CD14-positive monocyte (primary cell): ENCODE measurements at regions of chr7 and their contacts with region 1.

Region 1: DNA sequence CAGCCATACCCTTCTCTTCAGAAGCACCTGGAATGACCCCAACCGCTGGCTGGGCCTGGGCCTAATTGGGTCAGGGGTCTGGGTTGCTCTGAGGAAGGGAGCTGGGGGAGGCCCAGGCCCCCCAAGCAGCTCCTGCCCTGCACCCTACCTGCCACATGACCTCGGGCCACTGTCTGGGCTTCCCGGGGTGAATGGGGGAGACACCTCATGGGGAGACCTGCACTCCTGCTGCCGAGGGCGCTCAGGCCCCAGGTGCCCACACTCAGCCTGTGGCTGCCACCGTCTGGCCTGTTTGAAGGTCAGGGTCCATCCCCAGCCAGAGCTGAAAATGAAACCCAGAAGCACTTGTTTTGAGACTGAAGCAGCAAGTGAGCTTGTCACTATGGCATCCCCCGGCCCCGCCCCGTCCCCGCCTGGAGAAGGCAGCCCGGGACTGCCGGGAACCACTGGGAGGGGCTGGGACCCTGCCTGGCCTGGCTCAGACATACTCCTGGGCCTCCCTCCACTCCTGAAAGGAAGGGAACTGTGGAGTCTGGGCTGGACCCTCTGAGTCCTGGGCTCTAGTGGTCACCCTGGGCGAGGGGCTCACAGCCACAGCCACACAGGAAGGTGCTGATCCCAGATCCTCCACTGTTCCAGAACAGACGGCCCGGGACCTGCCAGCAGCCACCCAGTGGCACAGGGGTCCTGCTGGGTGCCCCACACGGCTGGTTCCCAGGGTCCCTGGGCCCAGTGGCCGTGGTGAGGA is 7.4 kb upstream of the MICALL2 start:
- DNase-seq: no peak
- H3K4me3 ChIP-seq: no peak overlapping the region
- H3K4me3 Mint-ChIP-seq: no peak overlapping the region
- H3K27ac ChIP-seq: no peak overlapping the region
- H3K27ac Mint-ChIP-seq: no peak overlapping the region
- H3K4me1 ChIP-seq: peaks cover 1 to 9% of the 10 kb centered on the region in 2 donors
- H3K4me1 Mint-ChIP-seq: peaks cover 13% of the 10 kb centered on the region
- H3K27me3 ChIP-seq: no peaks in the 10 kb centered on the region
- H3K27me3 Mint-ChIP-seq: peaks cover 0 to 2% (median 0%) of the 10 kb centered on the region in 3 donors
- CTCF ChIP-seq: no peak

Region 2: GRCh38 chr7:1418505-1419309 is 48.0 kb before region 1 on chr7:
- intact Hi-C with region 1: loop called in 1 of 2 experiments (anchors 5 kb)
- DNase-seq: peak in 2 of 3 donors; percentile 6 to 65
- H3K4me3 ChIP-seq: no peak overlapping the region
- H3K4me3 Mint-ChIP-seq: no peak overlapping the region
- H3K27ac ChIP-seq: no peak overlapping the region
- H3K27ac Mint-ChIP-seq: peak overlapping the region in 1 of 7 donors; percentile 66
- H3K4me1 ChIP-seq: peaks cover 0 to 3% of the 10 kb centered on the region in 2 donors
- H3K4me1 Mint-ChIP-seq: peaks cover 10% of the 10 kb centered on the region
- H3K27me3 ChIP-seq: peaks cover 0 to 7% of the 10 kb centered on the region in 2 donors
- H3K27me3 Mint-ChIP-seq: peaks cover 20 to 28% (median 21%) of the 10 kb centered on the region in 3 donors
- CTCF ChIP-seq: no peak

Region 3: DNA sequence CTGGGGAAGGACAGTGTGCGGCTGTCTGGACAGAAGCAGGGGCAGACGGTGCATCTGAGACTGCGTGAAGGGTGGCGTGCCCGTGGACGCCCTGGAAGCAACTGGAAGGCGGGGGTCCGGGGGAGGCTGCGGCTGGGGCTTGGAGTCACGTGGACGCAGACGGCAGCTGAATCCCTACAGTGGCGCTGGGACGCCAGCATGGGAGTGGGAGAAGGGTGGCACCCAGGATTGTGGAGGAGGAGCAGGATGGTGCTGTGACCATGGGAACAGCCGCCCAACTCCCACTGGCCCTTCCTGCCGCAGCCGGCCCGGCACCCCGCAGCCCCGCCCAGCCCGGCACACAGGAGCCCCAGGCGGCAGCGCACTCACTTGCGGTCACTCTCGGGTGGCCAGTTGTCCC is 27.7 kb after region 1 on chr7:
- intact Hi-C with region 1: no loop called
- DNase-seq: no peak
- H3K4me3 ChIP-seq: no peak overlapping the region
- H3K4me3 Mint-ChIP-seq: no peak overlapping the region
- H3K27ac ChIP-seq: no peak overlapping the region
- H3K27ac Mint-ChIP-seq: no peak overlapping the region
- H3K4me1 ChIP-seq: no peaks in the 10 kb centered on the region
- H3K4me1 Mint-ChIP-seq: no peaks in the 10 kb centered on the region
- H3K27me3 ChIP-seq: no peaks in the 10 kb centered on the region
- H3K27me3 Mint-ChIP-seq: no peaks in the 10 kb centered on the region
- CTCF ChIP-seq: no peak

Region 4: DNA sequence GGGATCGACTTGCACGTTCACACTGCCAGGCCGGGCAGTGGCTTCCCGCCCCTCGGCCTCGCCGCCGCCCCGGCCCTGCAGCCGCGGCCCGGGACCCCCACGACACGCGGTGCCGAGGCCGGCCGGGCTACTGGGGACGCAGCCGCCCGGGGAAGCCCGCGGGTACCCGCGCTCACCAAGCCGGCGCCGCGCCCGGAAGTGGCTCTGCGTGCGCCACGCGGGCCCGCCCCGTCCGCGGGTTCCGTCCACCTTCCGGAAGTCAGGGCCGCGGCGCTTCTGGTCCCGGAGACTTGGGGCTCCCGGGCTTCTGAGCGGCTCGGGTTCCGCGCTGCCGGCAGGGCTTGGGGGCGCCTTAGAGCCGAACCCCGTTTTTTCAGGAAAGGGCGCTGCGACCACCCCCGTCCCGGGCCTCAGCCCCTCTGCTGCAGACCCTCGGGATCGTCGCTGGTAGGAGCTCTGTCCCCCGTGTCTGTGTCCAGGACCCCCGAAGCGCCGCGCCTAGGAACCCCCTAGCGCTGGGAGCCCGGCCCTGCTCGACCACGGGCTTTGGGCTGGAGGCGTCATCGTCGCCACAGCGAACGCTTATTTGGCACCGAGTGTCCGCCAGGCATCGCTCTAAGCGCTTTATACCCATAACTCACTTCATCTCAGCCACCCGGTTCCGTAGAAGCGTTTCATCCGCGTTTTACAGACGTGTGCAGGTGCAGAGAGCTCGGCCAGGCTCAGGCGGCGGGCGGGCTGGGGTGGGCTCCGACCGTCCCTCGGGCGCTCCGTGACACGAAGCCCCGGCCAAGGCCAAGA is 103.3 kb after region 1 on chr7 and contains the start of gene PSMG3:
- intact Hi-C with region 1: no loop called
- DNase-seq: peak; percentile 87 to 88 (median 88)
- H3K4me3 ChIP-seq: peak within 1 kb of the TSS; percentile 59 to 99 (median 80)
- H3K4me3 Mint-ChIP-seq: peak within 1 kb of the TSS; percentile 87 to 94
- H3K27ac ChIP-seq: peak within 1 kb of the TSS; percentile 89 to 90
- H3K27ac Mint-ChIP-seq: peak within 1 kb of the TSS; percentile 83 to 93 (median 90)
- H3K4me1 ChIP-seq: peaks cover 21 to 32% of the 10 kb centered on the region in 2 donors
- H3K4me1 Mint-ChIP-seq: peaks cover 32% of the 10 kb centered on the region
- H3K27me3 ChIP-seq: no peaks in the 10 kb centered on the region
- H3K27me3 Mint-ChIP-seq: peaks cover 2 to 4% (median 3%) of the 10 kb centered on the region in 3 donors
- CTCF ChIP-seq: peak; percentile 32
- polyA plus RNA-seq, gene PSMG3: 32.6 to 38.8 (median 34.5) TPM